Activated B cell treated with CpG ODN at 0.5 μM for 24 hours (primary cell): ENCODE measurements at regions of chr6 and their contacts with region 1.

Region 1: GRCh38 chr6:149368065-149368464 is 32.0 kb upstream of the SUMO4 start:
- DNase-seq: no peak
- ATAC-seq: no peak
- H3K4me3 Mint-ChIP-seq: no peak overlapping the region
- H3K27ac Mint-ChIP-seq: no peak overlapping the region
- H3K4me1 Mint-ChIP-seq: peaks cover 45% of the 10 kb centered on the region
- H3K27me3 Mint-ChIP-seq: no peaks in the 10 kb centered on the region
- CTCF ChIP-seq: no peak

Region 2: DNA sequence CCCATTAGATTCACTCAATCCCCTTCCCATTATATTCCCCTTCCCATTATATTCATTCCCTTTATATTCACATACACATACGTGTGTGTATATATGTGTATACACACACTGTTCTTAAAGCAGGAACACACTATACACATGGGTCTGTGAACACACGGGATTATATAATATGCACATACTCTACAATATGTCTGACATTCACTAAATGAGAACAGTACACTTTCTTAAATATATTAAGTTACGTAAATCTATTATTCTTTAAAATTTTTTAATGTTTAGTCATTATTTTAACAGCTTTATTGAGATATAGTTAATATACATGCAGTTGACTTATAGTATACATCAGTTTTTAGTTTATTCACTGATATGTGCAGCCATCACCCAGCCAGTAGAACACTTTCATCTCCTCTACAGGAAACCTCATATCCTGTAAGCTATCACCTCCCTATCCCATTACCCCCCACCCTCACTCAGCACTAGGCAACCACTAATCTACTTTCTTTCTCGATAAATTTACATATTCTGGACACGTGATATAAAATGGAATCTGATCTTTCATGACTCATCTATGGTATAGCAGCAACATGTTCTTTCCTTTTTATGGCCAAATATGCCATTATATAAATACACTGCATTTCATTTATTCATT is 18.1 kb after region 1 on chr6:
- CTCF ChIA-PET with region 1: no interaction called
- POLR2A ChIA-PET with region 1: interaction called, 3 read pairs
- intact Hi-C with region 1: loop called (anchors 2 kb)
- DNase-seq: no peak
- ATAC-seq: no peak
- H3K4me3 Mint-ChIP-seq: no peak overlapping the region
- H3K27ac Mint-ChIP-seq: no peak overlapping the region
- H3K4me1 Mint-ChIP-seq: peaks cover 15% of the 10 kb centered on the region
- H3K27me3 Mint-ChIP-seq: no peaks in the 10 kb centered on the region
- CTCF ChIP-seq: no peak